ENCODE measurements at regions of chr17 and their contacts with region 1.

Region 1: GRCh38 chr17:14373614-14374259 is 72.9 kb downstream of the HS3ST3B1 start:
- DNase-seq: no peak
- ATAC-seq: no peak
- H3K4me3 ChIP-seq: no peak overlapping the region
- H3K4me1 ChIP-seq: no peaks in the 10 kb centered on the region
- CTCF ChIP-seq: no peak

Region 2: DNA sequence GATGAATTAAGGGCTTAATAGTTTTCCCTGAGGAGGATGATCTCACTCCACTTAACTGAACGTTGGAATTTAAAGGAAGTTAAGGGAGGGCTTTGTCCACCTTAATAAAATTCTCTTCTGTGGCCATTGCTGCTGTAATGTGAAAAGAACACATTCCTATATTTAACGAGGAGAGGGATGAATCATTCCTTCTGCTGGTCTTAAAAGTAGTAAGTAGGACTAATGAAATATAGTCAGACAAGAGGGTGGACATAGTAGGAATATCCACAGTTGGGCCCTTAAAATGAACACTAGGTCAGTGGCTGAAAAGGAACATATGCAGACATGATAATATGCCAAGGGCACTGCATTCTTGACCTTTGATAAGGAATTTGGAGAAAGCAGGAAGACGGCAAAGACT is 485.8 kb after region 1 on chr17:
- intact Hi-C with region 1: loop called in 1 of 2 experiments (anchors 5 kb)
- DNase-seq: no peak
- ATAC-seq: no peak
- H3K4me3 ChIP-seq: no peak overlapping the region
- H3K4me1 ChIP-seq: no peaks in the 10 kb centered on the region
- CTCF ChIP-seq: no peak